Activated CD4-positive, alpha-beta T cell treated with anti-CD3 and anti-CD28 coated beads, Interleukin-2, amount 10 ng/mL, durations not matched to agents 24 days and 14 days (primary cell): ENCODE measurements at regions of chr2 and their contacts with region 1.

Region 1: GRCh38 chr2:177332041-177332991 is 60.3 kb upstream of the AGPS start:
- DNase-seq: peak; percentile 88
- H3K4me3 Mint-ChIP-seq: no peak overlapping the region
- H3K27ac Mint-ChIP-seq: no peak overlapping the region
- H3K4me1 Mint-ChIP-seq: peaks cover 15% of the 10 kb centered on the region
- H3K27me3 Mint-ChIP-seq: no peaks in the 10 kb centered on the region

Region 2: DNA sequence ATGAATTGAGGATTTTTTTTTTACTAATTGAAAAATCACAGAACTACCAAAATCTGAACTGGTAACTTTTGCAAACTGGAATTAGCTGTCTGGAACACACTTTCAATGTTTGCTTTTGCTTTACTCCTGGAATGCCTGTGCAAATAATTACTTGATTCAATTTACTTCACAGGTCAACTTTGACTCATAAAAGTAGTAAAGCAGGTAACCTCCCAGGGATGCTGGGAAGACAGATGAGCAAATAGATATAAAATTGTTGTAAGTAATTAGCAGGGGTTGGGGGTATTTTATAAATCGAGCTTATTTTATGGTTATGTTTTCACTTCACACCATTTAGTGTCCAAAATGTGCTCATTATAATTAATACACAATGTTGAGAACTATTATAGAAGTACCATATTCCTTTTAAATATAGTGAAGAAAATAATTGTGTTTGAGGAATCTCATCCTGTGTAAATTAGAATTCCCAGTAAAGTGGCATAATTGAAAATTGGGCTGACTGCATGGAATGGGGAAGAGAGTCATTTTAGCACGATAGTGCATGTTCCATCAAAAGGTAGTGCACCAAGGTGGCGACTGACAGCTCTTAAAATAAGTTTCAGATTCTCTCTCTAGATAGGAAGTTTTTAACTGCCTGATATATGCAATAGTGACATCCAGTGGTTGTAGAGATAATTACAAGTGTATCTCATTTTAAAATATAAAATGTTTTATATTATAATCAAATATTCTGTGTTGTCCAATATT is 517.8 kb before region 1 on chr2:
- intact Hi-C with region 1: no loop called
- DNase-seq: peak; percentile 61
- H3K4me3 Mint-ChIP-seq: no peak overlapping the region
- H3K27ac Mint-ChIP-seq: no peak overlapping the region
- H3K4me1 Mint-ChIP-seq: peaks cover 8% of the 10 kb centered on the region
- H3K27me3 Mint-ChIP-seq: peaks cover 3% of the 10 kb centered on the region

Region 3: GRCh38 chr2:177164584-177165052 is 167.7 kb before region 1 on chr2:
- intact Hi-C with region 1: loop called (anchors 1 kb)
- DNase-seq: peak; percentile 94
- H3K4me3 Mint-ChIP-seq: no peak overlapping the region
- H3K27ac Mint-ChIP-seq: no peak overlapping the region
- H3K4me1 Mint-ChIP-seq: peaks cover 27% of the 10 kb centered on the region
- H3K27me3 Mint-ChIP-seq: peaks cover 11% of the 10 kb centered on the region

Region 4: DNA sequence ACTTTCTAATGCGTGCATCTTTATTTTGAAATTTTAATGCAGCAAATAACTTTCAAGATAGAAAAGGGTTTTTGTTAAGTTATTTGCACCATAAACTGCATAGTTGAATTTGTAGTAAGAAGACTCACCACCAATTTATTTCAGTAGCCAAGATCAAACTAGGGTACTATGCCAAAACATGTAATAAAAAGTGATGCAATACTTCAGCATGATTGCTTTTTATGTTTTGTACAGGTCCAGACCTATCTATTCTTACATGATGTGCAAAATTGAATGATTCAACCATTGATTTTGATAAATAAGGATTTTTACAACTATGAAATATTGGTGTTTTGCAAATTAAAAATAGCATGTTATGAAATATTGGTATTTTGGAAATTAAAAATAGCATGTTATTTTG is 87.0 kb after region 1 on chr2:
- intact Hi-C with region 1: loop called (anchors 1 kb)
- DNase-seq: no peak
- H3K4me3 Mint-ChIP-seq: no peak overlapping the region
- H3K27ac Mint-ChIP-seq: no peak overlapping the region
- H3K4me1 Mint-ChIP-seq: peaks cover 14% of the 10 kb centered on the region
- H3K27me3 Mint-ChIP-seq: no peaks in the 10 kb centered on the region

Region 5: DNA sequence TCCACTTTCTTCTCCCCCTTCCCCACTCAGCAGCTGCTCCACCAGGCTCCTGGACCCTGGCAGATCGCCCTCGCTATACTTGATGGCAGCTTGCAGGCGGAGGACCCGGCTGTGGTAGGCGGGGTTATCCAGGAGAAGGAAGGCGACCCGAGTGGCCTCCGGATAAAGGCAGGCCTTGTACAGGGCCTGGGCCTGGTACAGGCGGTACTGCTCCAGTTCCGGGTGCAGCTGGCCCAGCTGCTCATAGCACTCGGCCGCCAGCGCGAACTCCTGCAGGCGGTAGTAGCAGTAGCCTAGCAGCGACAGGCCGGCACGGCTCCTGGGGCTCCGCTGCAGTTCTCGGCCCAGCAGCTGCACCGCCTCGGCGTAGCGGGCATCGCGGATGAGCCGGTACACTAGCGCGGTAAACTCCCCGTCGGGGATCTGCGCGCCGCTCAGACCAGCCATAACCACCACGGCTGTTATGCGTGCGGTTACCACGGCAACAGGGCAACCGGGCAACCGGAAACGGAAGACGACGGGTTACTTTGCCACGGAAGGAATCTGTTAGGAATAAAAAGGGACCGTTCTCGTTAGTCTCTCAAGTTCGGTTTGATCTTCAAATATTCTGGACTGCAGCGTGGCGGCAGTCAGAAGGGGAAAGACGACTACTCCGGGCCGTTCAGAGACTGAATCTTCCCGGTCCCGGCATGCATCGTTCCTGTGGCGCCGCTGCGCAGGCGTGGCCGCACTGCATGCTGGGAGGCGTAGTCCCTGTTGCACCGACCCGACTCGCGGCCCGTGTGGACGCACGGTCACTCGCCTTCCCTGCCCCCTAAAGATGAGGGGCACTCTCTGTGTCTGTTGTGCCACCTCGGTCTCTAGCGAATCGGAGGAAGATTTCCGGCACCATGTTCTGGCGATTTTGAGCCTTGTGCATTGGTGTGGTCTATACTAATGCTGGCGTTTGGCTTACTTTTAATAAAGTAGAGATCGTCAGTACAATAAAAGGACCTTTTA is 286.2 kb after region 1 on chr2:
- intact Hi-C with region 1: loop called (anchors 5 kb)
- DNase-seq: peak; percentile 98
- H3K4me3 Mint-ChIP-seq: peak overlapping the region; percentile 92
- H3K27ac Mint-ChIP-seq: peak overlapping the region; percentile 97
- H3K4me1 Mint-ChIP-seq: peaks cover 8% of the 10 kb centered on the region
- H3K27me3 Mint-ChIP-seq: peaks cover 24% of the 10 kb centered on the region

Region 6: GRCh38 chr2:177763532-177764265 is 431.4 kb after region 1 on chr2:
- intact Hi-C with region 1: loop called (anchors 2 kb)
- DNase-seq: peak; percentile 92
- H3K4me3 Mint-ChIP-seq: no peak overlapping the region
- H3K27ac Mint-ChIP-seq: no peak overlapping the region
- H3K4me1 Mint-ChIP-seq: no peaks in the 10 kb centered on the region
- H3K27me3 Mint-ChIP-seq: peaks cover 25% of the 10 kb centered on the region